Thyroid gland (tissue), 4 donors: ENCODE measurements at regions of chr6 and their contacts with region 1.

Region 1: DNA sequence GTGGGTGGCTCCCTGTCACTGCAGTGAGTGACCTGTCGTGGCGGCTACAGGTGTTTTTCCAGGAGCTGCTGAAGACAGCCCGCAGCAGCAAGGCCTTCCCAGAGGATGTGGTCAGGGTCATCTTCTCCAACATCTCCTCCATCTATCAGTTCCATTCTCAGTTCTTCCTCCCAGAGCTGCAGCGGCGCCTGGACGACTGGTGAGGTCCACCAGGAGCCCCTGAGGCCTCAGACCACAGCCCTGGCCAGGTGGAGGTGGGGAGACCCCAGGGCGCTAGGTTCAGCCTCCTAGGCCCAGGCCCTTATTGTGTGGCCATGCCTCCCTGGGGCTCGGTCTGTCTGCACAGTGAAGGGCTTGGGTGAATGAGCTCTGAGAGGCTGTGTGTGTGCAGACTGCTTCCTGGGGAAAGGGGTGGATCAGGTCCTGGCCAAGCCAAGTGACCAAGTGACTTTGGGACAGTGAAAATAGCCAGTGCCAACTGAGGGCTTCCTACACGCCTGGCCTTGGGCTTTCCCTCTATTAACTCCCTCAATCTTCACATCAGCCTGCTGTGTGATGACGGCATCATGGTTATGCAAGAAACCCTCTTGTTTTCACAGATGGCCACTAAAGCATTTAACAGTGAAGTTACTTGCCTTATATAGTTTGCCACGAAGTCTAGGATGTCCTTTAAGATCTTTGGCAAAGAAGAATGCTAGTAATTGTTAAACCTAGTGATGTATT is 6.4 kb downstream of the FGD2 start:
- DNase-seq: peak; percentile 76 to 80
- H3K4me3 ChIP-seq: no peak overlapping the region
- H3K27ac ChIP-seq: peak overlapping the region; percentile 74 to 85 (median 76)
- H3K4me1 ChIP-seq: peaks cover 40 to 42% of the 10 kb centered on the region in 2 donors
- H3K27me3 ChIP-seq: no peaks in the 10 kb centered on the region
- CTCF ChIP-seq: no peak
- POLR2A ChIP-seq: peak in 1 of 2 donors; percentile 39

Region 2: DNA sequence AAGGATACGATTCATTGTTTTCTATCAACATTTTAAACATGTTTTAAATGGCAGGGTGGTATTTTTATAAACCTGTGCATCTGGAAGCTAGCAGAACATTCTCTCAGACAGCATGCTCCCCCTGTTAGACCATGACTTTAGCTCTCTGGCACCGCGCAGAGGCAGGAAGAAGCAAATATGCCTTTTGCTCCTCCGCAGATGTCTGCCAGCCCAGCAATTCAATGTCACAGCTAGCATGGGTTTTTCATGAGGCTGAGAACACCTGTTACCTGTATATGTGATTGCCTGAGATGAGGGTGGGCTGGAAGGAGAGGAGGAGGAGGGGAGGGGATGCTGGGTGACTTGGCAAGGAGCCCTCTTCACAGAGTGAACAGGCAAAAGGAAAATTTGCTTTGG is 32.5 kb before region 1 on chr6:
- intact Hi-C with region 1: loop called (anchors 5 kb)
- DNase-seq: peak; percentile 65 to 69
- H3K4me3 ChIP-seq: no peak overlapping the region
- H3K27ac ChIP-seq: peak overlapping the region in 2 of 3 donors; percentile 67 to 83
- H3K4me1 ChIP-seq: peaks cover 43 to 66% of the 10 kb centered on the region in 2 donors
- H3K27me3 ChIP-seq: no peaks in the 10 kb centered on the region
- CTCF ChIP-seq: peak in 4 of 6 experiments; percentile 42 to 78 (median 68)
- POLR2A ChIP-seq: no peak